Activated CD4-positive, alpha-beta T cell treated with anti-CD3 and anti-CD28 coated beads, Interleukin-2, amount 10 ng/mL, durations not matched to agents 24 days and 14 days (primary cell): ENCODE measurements at regions of chr14 and their contacts with region 1.

Region 1: GRCh38 chr14:91323671-91324605 is 79.4 kb upstream of the GPR68 start:
- DNase-seq: peak; percentile 97
- H3K4me3 Mint-ChIP-seq: peak overlapping the region; percentile 82
- H3K27ac Mint-ChIP-seq: peak overlapping the region; percentile 97
- H3K4me1 Mint-ChIP-seq: peaks cover 45% of the 10 kb centered on the region
- H3K27me3 Mint-ChIP-seq: no peaks in the 10 kb centered on the region

Region 2: DNA sequence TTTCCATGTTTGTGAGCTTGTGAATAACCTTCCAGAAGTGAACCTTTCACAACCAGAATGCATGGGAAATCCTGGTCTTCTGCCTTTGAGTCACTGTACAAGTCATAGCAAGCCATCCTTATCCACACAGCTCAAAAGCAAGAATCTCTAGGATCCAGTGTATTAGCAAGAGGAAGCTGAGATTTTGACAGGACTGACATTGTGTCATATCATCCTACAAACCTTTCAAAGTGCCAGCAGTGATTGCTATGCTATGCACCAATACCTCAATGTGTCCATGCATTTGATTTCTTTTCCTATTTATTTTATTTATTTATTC is 978.7 kb before region 1 on chr14:
- intact Hi-C with region 1: no loop called
- DNase-seq: no peak
- H3K4me3 Mint-ChIP-seq: no peak overlapping the region
- H3K27ac Mint-ChIP-seq: no peak overlapping the region
- H3K4me1 Mint-ChIP-seq: no peaks in the 10 kb centered on the region
- H3K27me3 Mint-ChIP-seq: peaks cover 3% of the 10 kb centered on the region

Region 3: GRCh38 chr14:91219517-91220389 is 104.2 kb before region 1 on chr14:
- intact Hi-C with region 1: no loop called
- DNase-seq: no peak
- H3K4me3 Mint-ChIP-seq: no peak overlapping the region
- H3K27ac Mint-ChIP-seq: peak overlapping the region; percentile 28
- H3K4me1 Mint-ChIP-seq: peaks cover 47% of the 10 kb centered on the region
- H3K27me3 Mint-ChIP-seq: no peaks in the 10 kb centered on the region

Region 4: DNA sequence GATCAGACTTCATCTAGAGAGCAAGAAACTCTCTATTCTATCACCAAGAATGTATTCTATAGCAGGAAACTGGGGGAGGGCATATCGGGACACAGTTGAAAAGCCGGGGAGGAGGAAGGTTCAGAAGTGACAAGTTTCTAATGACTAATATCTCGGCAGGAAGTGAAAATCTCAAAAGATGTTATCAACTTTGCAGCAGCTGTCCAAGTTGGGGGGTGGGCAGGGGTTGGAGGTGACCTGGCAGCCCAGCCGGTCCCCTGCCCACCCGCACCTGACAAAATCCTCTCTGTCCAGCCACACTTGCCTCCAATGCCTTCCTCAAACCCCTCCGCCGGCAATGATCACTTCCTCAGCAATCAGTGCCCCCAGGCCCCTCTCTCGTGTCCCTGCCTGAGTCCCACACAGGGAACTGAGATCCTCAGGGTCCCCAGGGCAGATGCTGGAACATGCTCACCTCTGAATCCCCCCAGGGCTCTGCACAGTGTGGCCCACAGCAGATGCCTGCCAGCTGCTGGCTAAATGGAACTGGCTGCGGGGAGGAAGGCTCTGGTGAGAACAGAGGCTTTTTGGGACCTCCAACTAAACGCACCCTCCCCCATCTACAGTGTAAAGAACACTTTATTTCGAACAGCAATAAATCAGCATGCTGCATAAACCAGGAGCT is 49.8 kb after region 1 on chr14:
- intact Hi-C with region 1: loop called (anchors 1 kb)
- DNase-seq: peak; percentile 84
- H3K4me3 Mint-ChIP-seq: peak overlapping the region; percentile 80
- H3K27ac Mint-ChIP-seq: peak overlapping the region; percentile 90
- H3K4me1 Mint-ChIP-seq: peaks cover 94% of the 10 kb centered on the region
- H3K27me3 Mint-ChIP-seq: no peaks in the 10 kb centered on the region

Region 5: GRCh38 chr14:91405241-91405721 is 81.3 kb after region 1 on chr14:
- intact Hi-C with region 1: loop called (anchors 1 kb)
- DNase-seq: peak; percentile 85
- H3K4me3 Mint-ChIP-seq: peak overlapping the region; percentile 76
- H3K27ac Mint-ChIP-seq: peak overlapping the region; percentile 92
- H3K4me1 Mint-ChIP-seq: peaks cover 79% of the 10 kb centered on the region
- H3K27me3 Mint-ChIP-seq: no peaks in the 10 kb centered on the region